ENCODE measurements at regions of chr12 and their contacts with region 1.

Region 1: DNA sequence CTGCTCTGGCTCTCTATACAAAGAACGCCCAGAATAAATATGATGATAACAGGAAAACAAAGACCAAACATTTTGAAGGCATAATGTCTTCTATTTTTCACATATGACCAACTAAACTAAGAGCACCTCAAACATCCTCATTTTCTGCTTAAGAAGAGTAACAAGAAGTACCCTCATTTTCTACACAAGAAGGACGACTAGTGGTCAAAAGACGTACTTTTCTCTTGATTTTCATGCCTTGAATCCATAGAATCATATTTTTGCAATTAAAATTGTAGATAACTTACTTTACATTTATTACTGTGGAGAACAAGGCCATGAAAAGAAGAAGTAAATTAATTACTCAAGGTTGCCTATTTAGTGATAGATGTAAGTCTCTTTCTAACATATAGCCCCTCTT is 358.6 kb downstream of the DUSP6 start:
- DNase-seq: no peak

Region 2: GRCh38 chr12:88111074-88111652 is 882.5 kb before region 1 on chr12:
- intact Hi-C with region 1: loop called (anchors 10 kb)
- DNase-seq: no peak

Region 3: GRCh38 chr12:88579161-88579517 is 414.5 kb before region 1 on chr12:
- intact Hi-C with region 1: loop called (anchors 5 kb)
- DNase-seq: no peak

Region 4: GRCh38 chr12:89181271-89181920 is 187.7 kb after region 1 on chr12:
- intact Hi-C with region 1: no loop called
- DNase-seq: no peak